CD4-positive, alpha-beta T cell (primary cell): ENCODE measurements at regions of chr5 and their contacts with region 1.

Region 1: DNA sequence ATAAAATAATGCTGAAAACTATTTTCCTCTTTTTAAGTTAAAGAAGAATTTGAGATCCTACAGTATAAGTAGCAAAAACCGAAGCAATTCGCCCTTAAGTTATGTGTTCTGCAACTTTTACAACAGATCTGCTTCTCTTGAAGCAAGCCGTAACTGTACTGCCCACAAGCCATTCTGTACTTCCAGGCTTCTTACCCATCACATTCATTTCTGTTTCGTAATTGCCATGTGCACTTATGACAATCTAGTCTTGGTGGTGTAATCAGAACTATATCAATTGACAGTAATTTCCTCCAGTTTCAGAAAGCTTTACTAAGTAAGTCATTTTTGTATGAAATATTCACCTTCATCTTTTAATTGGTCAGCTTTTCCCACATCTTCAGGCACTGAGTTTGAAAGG is 13.8 kb downstream of the SGTB start:
- DNase-seq: no peak
- ATAC-seq: no peak
- H3K4me3 ChIP-seq: no peak overlapping the region
- H3K4me3 Mint-ChIP-seq: no peak overlapping the region
- H3K27ac ChIP-seq: no peak overlapping the region
- H3K27ac Mint-ChIP-seq: no peak overlapping the region
- H3K4me1 ChIP-seq: peaks cover under 1% of the 10 kb centered on the region
- H3K4me1 Mint-ChIP-seq: peaks cover 20% of the 10 kb centered on the region
- H3K27me3 ChIP-seq: no peaks in the 10 kb centered on the region
- H3K27me3 Mint-ChIP-seq: no peaks in the 10 kb centered on the region
- CTCF ChIP-seq: no peak

Region 2: DNA sequence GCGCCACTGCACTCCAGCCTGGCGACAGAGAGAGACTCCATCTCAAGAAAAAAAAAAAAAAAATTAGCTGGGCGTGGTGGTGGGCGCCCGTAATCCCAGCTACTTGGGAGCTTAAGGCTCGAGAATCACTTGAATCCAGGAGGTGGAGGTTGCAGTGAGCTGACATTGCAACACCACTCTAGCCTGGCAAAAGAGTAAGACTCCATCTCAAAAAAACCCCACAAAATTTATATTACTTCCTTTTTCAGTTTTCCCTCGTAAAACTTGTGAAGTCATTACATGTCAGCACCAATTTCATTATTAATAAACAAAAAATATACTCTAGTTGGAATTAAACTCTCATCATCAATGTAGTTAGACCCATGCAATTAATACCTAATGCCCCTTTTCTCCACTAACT is 39.4 kb before region 1 on chr5:
- CTCF ChIA-PET with region 1: no interaction called
- POLR2A ChIA-PET with region 1: no interaction called
- intact Hi-C with region 1: loop called in 1 of 2 experiments (anchors 5 kb)
- DNase-seq: no peak
- ATAC-seq: no peak
- H3K4me3 ChIP-seq: no peak overlapping the region
- H3K4me3 Mint-ChIP-seq: no peak overlapping the region
- H3K27ac ChIP-seq: no peak overlapping the region
- H3K27ac Mint-ChIP-seq: no peak overlapping the region
- H3K4me1 ChIP-seq: no peaks in the 10 kb centered on the region
- H3K4me1 Mint-ChIP-seq: no peaks in the 10 kb centered on the region
- H3K27me3 ChIP-seq: no peaks in the 10 kb centered on the region
- H3K27me3 Mint-ChIP-seq: no peaks in the 10 kb centered on the region
- CTCF ChIP-seq: no peak